Dendritic cell treated with granulocyte-macrophage colony-stimulating factor and Interleukin-4, amounts not matched to agents 40 ng/mL and 50 ng/mL, for 4 days (primary cell): ENCODE measurements at regions of chr4 and their contacts with region 1.

Region 1: GRCh38 chr4:168847771-168848511 is 162.1 kb downstream of the CBR4 start:
- H3K4me3 Mint-ChIP-seq: peak overlapping the region; percentile 39
- H3K27ac Mint-ChIP-seq: peak overlapping the region; percentile 9
- H3K4me1 Mint-ChIP-seq: peaks cover 31% of the 10 kb centered on the region
- H3K27me3 Mint-ChIP-seq: peaks cover 15% of the 10 kb centered on the region

Region 2: DNA sequence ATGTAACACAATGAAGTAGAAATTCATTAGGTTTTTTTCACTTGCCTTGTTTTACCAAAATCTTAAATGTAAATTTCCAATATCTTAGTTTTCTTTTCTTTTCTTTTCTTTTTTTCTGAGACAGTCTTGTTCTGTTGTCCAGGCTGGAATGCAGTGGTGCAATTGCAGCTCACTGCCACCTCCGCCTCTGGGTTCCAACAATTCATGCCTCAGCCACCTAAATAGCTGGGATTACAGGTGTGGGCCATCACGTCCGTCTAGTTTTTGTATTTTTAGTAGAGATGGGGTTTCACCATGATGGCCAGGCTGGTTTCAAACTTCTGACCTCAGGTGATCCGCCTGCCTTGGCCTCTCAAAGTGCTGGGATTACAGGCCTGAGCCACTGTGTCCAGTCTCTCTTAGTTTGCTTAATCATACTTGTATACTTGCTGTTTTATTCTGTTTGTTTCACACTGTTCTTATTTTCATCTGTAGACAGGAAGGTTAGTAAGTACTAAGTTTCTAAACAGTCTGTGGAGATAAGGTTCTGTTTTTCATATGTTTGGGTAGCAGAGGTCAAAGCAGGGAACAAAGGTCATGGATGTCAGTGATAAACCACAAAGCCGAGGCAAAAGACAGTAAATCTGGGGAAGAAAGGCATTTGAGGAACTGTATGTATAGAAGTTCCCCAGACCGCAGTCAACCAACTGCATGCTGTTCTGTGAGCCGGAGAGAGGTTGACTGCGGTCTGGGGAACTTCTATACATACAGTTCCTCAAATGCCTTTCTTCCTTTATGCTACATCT is 33.1 kb after region 1 on chr4:
- intact Hi-C with region 1: loop called (anchors 5 kb)
- H3K4me3 Mint-ChIP-seq: peak overlapping the region; percentile 23
- H3K27ac Mint-ChIP-seq: peak overlapping the region; percentile 64
- H3K4me1 Mint-ChIP-seq: peaks cover 56% of the 10 kb centered on the region
- H3K27me3 Mint-ChIP-seq: peaks cover 30% of the 10 kb centered on the region

Region 3: GRCh38 chr4:169005453-169006099 is 157.6 kb after region 1 on chr4:
- intact Hi-C with region 1: no loop called
- H3K4me3 Mint-ChIP-seq: no peak overlapping the region
- H3K27ac Mint-ChIP-seq: no peak overlapping the region
- H3K4me1 Mint-ChIP-seq: peaks cover 19% of the 10 kb centered on the region
- H3K27me3 Mint-ChIP-seq: no peaks in the 10 kb centered on the region